CD14-positive monocyte (primary cell): ENCODE measurements at regions of chr7 and their contacts with region 1.

Region 1: DNA sequence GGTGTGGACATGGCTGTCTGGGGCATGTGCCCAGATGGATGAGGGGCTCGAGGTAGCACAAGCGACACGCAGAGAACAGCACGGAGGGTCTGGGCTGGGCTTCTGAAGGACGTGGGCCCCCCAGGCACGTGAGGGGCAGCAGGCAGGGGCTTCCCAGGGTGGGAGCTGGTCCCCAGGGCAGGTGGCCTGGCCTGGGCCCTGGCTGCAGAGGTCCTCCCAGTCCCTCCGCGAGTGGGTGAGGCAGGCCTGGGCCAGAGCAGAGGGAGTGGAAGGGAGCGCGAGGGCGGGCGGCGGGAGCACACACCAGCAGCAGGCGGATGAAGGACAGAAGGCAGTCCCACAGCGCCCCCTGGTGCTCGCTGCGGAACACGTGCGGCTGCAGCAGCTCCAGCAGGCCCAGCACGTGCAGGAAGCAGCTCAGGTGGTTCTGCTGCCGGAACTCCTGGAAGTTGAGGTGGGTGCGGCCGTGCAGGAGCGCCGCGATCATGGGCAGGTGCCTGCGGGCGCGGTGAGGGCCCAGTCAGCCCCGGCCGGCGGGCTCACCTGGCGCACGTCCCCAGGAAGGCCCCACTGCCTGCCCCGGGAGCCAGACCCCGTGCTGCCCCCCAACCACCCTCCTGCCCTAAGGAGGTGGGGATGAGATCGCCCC is 14.7 kb upstream of the MICALL2 start:
- DNase-seq: peak; percentile 67 to 78 (median 72)
- H3K4me3 ChIP-seq: no peak overlapping the region
- H3K4me3 Mint-ChIP-seq: no peak overlapping the region
- H3K27ac ChIP-seq: no peak overlapping the region
- H3K27ac Mint-ChIP-seq: no peak overlapping the region
- H3K4me1 ChIP-seq: no peaks in the 10 kb centered on the region
- H3K4me1 Mint-ChIP-seq: no peaks in the 10 kb centered on the region
- H3K27me3 ChIP-seq: no peaks in the 10 kb centered on the region
- H3K27me3 Mint-ChIP-seq: peaks cover 0 to 2% (median 0%) of the 10 kb centered on the region in 3 donors
- CTCF ChIP-seq: peak; percentile 94

Region 2: GRCh38 chr7:1225441-1226185 is 248.4 kb before region 1 on chr7:
- intact Hi-C with region 1: loop called in 1 of 2 experiments (anchors 5 kb)
- DNase-seq: no peak
- H3K4me3 ChIP-seq: no peak overlapping the region
- H3K4me3 Mint-ChIP-seq: peak overlapping the region in 1 of 2 donors; percentile 90
- H3K27ac ChIP-seq: no peak overlapping the region
- H3K27ac Mint-ChIP-seq: no peak overlapping the region
- H3K4me1 ChIP-seq: peaks cover 7 to 8% of the 10 kb centered on the region in 2 donors
- H3K4me1 Mint-ChIP-seq: peaks cover 10% of the 10 kb centered on the region
- H3K27me3 ChIP-seq: peaks cover 48 to 87% of the 10 kb centered on the region in 2 donors
- H3K27me3 Mint-ChIP-seq: peaks cover 85 to 93% (median 91%) of the 10 kb centered on the region in 3 donors
- CTCF ChIP-seq: peak; percentile 77

Region 3: DNA sequence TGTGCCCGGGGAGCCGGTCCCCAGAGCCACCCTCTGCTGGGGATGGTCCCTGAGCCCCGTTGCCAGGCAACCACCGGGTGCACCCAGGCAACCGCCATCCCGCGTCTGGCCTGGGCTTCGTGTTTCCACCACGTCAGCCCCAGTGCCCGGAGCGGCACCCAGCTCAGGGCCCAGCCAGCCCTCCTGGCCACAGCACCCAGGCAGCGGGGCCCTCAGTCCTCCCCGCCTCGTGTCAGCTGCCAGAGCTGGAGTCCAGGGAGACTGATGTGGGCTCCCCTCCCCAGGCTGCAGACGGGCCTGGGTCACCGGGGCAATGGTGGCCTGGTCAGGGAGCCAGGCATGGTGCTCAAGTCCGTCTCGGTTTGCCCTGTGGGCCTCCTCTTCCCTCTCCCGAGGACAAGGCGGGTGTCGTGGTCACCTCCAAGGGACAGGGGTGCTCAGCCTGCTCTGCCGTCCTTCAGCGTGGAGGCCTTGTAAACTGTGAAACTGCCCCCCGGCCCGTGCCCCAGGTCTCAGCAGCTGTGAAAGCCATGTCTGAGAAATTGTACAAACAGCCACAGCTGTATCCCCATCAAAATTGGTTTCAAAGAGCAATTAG is 87.3 kb before region 1 on chr7:
- intact Hi-C with region 1: no loop called
- DNase-seq: no peak
- H3K4me3 ChIP-seq: no peak overlapping the region
- H3K4me3 Mint-ChIP-seq: no peak overlapping the region
- H3K27ac ChIP-seq: no peak overlapping the region
- H3K27ac Mint-ChIP-seq: no peak overlapping the region
- H3K4me1 ChIP-seq: no peaks in the 10 kb centered on the region
- H3K4me1 Mint-ChIP-seq: no peaks in the 10 kb centered on the region
- H3K27me3 ChIP-seq: peaks cover 0 to 6% of the 10 kb centered on the region in 2 donors
- H3K27me3 Mint-ChIP-seq: peaks cover 21 to 41% (median 29%) of the 10 kb centered on the region in 3 donors
- CTCF ChIP-seq: no peak

Region 4: GRCh38 chr7:1432411-1433082 is 41.4 kb before region 1 on chr7:
- intact Hi-C with region 1: loop called (anchors 2 to 5 kb)
- DNase-seq: peak; percentile 42 to 64 (median 43)
- H3K4me3 ChIP-seq: no peak overlapping the region
- H3K4me3 Mint-ChIP-seq: peak overlapping the region in 1 of 2 donors; percentile 31
- H3K27ac ChIP-seq: no peak overlapping the region
- H3K27ac Mint-ChIP-seq: peak overlapping the region in 2 of 7 donors; percentile 5 to 47
- H3K4me1 ChIP-seq: no peaks in the 10 kb centered on the region
- H3K4me1 Mint-ChIP-seq: peaks cover 2% of the 10 kb centered on the region
- H3K27me3 ChIP-seq: no peaks in the 10 kb centered on the region
- H3K27me3 Mint-ChIP-seq: peaks cover 1 to 4% (median 3%) of the 10 kb centered on the region in 3 donors
- CTCF ChIP-seq: peak; percentile 99